AG04449 (cell line): ENCODE measurements at regions of chr13 and their contacts with region 1.

Region 1: DNA sequence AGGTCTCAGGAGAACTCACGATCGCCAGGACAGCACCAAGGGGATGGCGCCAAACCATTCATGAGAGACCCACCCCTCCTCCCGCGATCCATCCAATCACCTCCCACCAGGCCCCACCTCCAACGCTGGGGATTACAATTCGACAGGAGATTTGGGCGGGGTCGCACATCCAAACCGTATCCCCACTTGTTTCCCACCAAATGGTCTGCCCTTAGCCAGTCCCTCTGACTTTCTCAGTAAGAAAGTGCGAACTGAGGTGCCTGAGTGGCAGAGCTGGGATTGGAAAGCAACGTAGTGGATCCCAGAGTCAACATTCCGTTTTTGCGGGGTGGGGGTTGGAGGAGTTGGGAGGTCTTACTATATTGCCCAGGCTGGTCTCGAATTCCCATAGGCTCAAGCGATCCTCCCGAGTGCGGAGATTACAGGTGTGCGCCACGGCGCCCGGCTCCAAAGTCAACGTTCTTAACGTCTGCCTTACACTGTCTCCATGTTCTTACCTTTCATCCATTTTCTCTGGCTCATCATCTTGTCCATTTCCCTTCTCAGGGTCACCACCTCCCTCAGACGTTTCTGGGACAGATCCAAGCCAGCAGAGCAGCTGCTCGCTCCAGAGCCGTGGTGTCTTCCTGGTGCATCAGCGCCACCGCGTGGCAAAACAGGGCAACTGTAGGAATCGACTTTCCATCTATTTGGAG is 102.7 kb upstream of the ABCC4 start:
- DNase-seq: peak; percentile 4
- H3K4me3 ChIP-seq: peak overlapping the region; percentile 58
- CTCF ChIP-seq: peak; percentile 89

Region 2: GRCh38 chr13:94660695-94661326 is 743.2 kb before region 1 on chr13:
- CTCF ChIA-PET with region 1: interaction called, 14 read pairs
- POLR2A ChIA-PET with region 1: no interaction called
- DNase-seq: no peak
- H3K4me3 ChIP-seq: no peak overlapping the region
- CTCF ChIP-seq: no peak

Region 3: DNA sequence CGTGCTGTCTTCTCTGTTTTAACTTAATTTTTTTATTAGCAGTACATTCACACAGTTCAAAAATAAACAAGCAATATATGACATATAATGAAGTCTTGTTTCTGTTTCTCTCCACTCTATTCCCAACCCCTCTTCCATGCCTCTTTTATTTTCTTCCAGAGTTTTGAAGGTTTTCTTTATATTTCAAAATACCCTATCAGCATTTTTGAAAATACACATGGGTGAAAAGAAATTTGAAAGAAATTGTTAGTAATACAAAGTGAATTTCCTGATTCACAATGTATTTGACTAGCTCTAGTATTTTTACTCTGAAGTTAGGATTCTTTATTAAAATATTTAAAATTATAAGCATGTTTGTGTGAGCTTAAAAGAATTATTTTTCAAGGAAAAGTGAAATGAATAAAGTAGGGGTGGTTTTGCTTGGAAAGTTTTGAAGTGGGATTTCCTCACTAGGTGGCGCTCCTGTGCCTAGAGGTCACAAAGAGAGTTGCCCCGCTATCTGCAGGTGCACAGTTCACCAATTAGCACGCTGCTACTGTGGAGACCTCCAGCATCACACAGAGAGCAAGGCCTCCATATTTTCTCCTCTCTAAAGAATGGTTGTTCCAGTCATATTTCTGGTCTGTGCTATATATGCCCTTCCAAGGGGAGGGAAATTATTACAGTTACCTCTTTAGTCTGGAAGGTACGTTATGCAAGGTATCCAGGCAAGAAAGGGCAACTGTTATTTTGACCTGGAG is 729.2 kb before region 1 on chr13:
- CTCF ChIA-PET with region 1: interaction called, 19 read pairs
- POLR2A ChIA-PET with region 1: no interaction called
- DNase-seq: no peak
- H3K4me3 ChIP-seq: no peak overlapping the region
- CTCF ChIP-seq: peak; percentile 62

Region 4: DNA sequence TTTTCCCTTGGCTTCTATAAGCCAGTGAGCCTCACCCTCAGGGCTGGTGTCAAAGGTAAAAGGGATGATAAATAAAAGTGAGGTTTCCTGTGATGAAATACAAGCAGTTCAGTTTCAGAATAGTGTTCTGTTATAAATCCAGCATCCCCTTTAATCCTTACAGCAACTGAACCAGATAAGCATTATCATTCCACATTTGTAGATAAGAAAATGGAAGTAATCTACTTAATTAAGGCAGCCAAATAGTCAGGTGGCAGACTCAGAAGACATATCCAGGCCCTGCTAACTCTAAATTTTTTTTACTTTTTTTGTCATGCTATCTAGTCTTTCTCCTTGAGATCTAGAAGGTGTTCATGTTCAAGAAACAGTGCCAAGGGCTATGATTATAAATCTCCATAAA is 592.2 kb before region 1 on chr13:
- CTCF ChIA-PET with region 1: no interaction called
- POLR2A ChIA-PET with region 1: no interaction called
- DNase-seq: no peak
- H3K4me3 ChIP-seq: no peak overlapping the region
- CTCF ChIP-seq: no peak

Region 5: DNA sequence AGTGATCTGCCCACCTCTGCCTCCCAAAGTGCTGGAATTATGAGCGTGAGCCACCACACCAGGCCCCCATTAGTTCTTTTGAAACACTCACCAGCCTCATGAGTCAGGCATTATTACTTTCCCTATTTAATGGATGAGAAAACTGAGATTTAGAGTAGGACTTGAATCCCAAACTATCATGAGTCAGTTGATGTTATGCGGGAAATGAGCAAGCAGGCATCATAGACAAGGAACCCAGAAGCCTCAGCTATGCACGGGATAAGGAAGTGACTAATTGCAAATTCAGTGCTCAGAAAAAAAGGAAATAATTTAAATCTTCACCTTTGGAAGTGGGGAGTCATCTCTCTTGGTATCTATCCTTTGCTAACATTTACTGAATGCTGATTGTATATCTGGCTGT is 320.2 kb before region 1 on chr13:
- CTCF ChIA-PET with region 1: no interaction called
- POLR2A ChIA-PET with region 1: no interaction called
- DNase-seq: peak; percentile 65
- H3K4me3 ChIP-seq: no peak overlapping the region
- CTCF ChIP-seq: no peak

Region 6: DNA sequence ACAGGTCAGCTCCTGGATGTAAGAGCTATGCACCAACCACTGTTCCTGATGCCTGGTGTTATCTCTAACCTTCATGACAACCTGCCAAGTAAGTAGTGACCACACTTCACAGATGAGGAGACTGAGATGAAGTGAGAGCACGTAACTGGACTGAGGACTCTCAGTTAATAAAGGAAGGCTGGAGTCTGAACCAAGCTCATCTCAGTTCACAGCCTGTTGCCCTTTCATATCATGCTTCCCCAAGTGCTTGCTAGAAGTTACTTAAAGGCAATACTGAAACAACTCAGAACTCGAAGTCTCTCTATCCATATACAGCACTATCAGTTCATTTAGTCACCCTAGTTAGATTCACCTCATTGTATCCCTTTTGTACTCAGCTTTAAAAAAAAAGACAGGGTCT is 222.4 kb before region 1 on chr13:
- CTCF ChIA-PET with region 1: interaction called, 1,369 read pairs
- POLR2A ChIA-PET with region 1: no interaction called
- DNase-seq: no peak
- H3K4me3 ChIP-seq: no peak overlapping the region
- CTCF ChIP-seq: no peak

Region 7: GRCh38 chr13:95301183-95301967 is 102.6 kb before region 1 on chr13 and contains the start of gene ABCC4:
- CTCF ChIA-PET with region 1: interaction called, 19 read pairs
- POLR2A ChIA-PET with region 1: no interaction called
- DNase-seq: no peak
- H3K4me3 ChIP-seq: peak within 1 kb of the TSS; percentile 81
- CTCF ChIP-seq: peak; percentile 6

Region 8: GRCh38 chr13:95378603-95379002 is 25.4 kb before region 1 on chr13:
- CTCF ChIA-PET with region 1: interaction called, 104 read pairs
- POLR2A ChIA-PET with region 1: no interaction called
- DNase-seq: no peak
- H3K4me3 ChIP-seq: no peak overlapping the region
- CTCF ChIP-seq: no peak

Region 9: DNA sequence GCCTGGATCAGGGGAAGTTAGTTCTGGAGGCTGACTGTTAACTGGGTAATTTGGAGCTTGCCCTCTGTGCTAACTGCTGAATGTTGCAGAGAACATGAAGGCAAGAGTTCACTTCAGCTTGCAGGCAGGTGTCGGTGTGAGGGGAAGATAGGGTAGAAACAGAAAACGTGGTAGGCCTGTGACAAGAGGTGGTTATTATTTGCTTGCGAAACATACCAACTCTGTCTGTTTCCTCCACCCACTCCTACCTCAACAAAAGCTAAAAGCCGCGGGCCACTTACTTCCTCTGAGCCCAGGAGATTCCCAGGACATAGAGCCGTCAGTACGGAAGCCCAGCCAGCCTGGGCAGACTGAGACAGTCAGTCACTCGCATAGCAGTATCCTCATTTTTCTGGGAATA is 16.5 kb after region 1 on chr13:
- CTCF ChIA-PET with region 1: interaction called, 17 read pairs
- POLR2A ChIA-PET with region 1: no interaction called
- DNase-seq: no peak
- H3K4me3 ChIP-seq: no peak overlapping the region
- CTCF ChIP-seq: no peak

Region 10: GRCh38 chr13:95573226-95573625 is 169.3 kb after region 1 on chr13:
- CTCF ChIA-PET with region 1: no interaction called
- POLR2A ChIA-PET with region 1: no interaction called
- DNase-seq: no peak
- H3K4me3 ChIP-seq: no peak overlapping the region
- CTCF ChIP-seq: no peak

Region 11: GRCh38 chr13:95660981-95661581 is 257.1 kb after region 1 on chr13:
- CTCF ChIA-PET with region 1: no interaction called
- POLR2A ChIA-PET with region 1: no interaction called
- DNase-seq: no peak
- H3K4me3 ChIP-seq: no peak overlapping the region
- CTCF ChIP-seq: peak; percentile 43